ENCODE measurements at regions of chr9 and their contacts with region 1.

Region 1: DNA sequence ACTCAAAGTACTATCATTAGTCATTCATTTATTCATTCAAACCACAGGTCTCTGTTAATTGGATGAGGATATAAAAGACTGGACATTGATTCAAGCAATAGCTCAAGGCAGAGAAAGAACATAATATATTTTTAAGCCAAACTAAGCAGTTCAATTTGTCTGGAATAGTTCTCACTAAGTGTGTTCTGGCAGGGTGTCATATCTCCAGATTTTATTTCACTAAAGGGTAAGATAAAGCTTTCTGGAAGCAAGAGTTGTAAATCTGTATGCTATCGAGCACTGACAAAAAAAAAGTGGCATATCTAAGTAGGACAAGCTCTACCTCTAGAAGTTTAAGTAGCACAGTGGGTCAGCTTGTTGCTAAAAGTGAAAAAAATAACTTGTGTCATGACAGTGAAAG is 375.6 kb downstream of the TUSC1 start:
- DNase-seq: no peak
- ATAC-seq: no peak
- H3K4me3 ChIP-seq: no peak overlapping the region
- H3K4me3 Mint-ChIP-seq: no peak overlapping the region
- H3K27ac ChIP-seq: no peak overlapping the region
- H3K27ac Mint-ChIP-seq: no peak overlapping the region
- H3K4me1 ChIP-seq: no peaks in the 10 kb centered on the region
- H3K4me1 Mint-ChIP-seq: no peaks in the 10 kb centered on the region
- H3K27me3 ChIP-seq: no peaks in the 10 kb centered on the region
- H3K27me3 Mint-ChIP-seq: no peaks in the 10 kb centered on the region
- CTCF ChIP-seq: no peak

Region 2: DNA sequence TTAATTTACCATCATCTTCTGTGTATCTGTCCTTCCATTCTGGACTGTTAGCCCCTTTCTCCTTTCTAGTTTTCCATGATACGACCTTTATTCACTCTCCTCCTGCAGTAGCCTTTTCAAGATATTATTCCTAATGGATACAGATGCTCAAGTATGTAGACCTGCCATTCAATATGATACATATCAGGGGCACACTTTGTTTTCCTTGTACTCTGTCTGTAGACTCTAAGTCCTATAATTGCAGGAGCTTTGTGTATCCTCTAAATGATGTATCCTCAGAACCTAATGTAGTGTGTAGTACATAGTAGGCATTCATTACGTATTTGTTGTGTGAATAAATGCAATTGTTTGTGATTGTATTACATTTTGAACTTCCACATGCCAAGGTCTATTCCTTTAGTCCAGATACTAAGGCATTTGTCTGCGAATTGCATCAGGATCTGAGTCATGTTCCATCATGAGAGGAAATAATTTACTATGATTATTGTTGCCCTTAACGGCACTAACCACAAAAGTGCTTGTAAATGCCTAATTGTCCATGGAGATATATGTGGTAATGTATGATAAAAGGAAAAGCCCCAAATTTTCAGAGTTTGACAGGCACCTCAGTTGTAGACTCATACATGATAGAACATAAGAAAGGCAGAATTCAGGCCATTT is 699.8 kb before region 1 on chr9:
- CTCF ChIA-PET with region 1: no interaction called
- POLR2A ChIA-PET with region 1: no interaction called
- intact Hi-C with region 1: loop called in 1 of 2 experiments (anchors 10 kb)
- DNase-seq: no peak
- ATAC-seq: no peak
- H3K4me3 ChIP-seq: no peak overlapping the region
- H3K4me3 Mint-ChIP-seq: no peak overlapping the region
- H3K27ac ChIP-seq: no peak overlapping the region
- H3K27ac Mint-ChIP-seq: no peak overlapping the region
- H3K4me1 ChIP-seq: no peaks in the 10 kb centered on the region
- H3K4me1 Mint-ChIP-seq: no peaks in the 10 kb centered on the region
- H3K27me3 ChIP-seq: no peaks in the 10 kb centered on the region
- H3K27me3 Mint-ChIP-seq: no peaks in the 10 kb centered on the region
- CTCF ChIP-seq: no peak

Region 3: DNA sequence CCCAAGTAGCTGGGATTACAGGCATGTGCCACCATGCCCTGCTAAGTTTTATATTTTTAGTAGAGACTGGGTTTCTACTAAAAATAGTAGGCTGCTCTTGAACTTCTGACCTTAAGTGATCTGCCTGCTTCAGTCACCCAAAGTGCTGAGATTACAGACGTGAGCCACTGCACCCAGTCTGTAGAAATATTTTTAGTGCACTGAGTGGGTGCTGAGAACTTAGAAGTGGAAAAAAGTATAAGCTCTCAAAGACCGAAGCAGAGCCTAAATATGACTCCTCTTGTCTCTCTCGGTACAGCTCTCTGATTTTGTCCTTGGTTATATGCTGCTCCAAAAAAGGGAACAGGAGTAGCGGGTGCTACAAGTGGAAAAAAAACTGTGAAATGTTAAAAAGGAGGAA is 403.1 kb before region 1 on chr9:
- CTCF ChIA-PET with region 1: no interaction called
- POLR2A ChIA-PET with region 1: no interaction called
- intact Hi-C with region 1: no loop called
- DNase-seq: no peak
- ATAC-seq: no peak
- H3K4me3 ChIP-seq: no peak overlapping the region
- H3K4me3 Mint-ChIP-seq: no peak overlapping the region
- H3K27ac ChIP-seq: no peak overlapping the region
- H3K27ac Mint-ChIP-seq: no peak overlapping the region
- H3K4me1 ChIP-seq: no peaks in the 10 kb centered on the region
- H3K4me1 Mint-ChIP-seq: no peaks in the 10 kb centered on the region
- H3K27me3 ChIP-seq: no peaks in the 10 kb centered on the region
- H3K27me3 Mint-ChIP-seq: no peaks in the 10 kb centered on the region
- CTCF ChIP-seq: no peak

Region 4: DNA sequence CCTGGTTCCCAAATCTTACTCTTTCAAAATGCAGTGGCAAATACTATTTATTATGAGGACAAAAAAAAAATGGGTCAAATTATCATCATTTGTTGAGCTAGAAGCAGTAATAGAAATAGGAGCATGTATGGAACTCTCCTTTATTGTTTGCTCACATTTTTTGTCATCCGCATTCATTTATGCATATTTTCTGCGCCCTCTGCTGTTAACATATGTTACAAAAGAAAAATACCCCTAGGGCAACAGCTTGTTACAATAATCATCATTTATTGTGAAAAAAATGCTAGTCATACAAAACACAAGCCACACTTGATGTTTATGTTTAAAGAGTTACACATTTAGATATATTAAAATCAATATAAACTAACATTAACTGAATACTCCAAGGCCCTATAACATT is 47.4 kb after region 1 on chr9:
- CTCF ChIA-PET with region 1: no interaction called
- POLR2A ChIA-PET with region 1: no interaction called
- intact Hi-C with region 1: no loop called
- DNase-seq: no peak
- ATAC-seq: no peak
- H3K4me3 ChIP-seq: no peak overlapping the region
- H3K4me3 Mint-ChIP-seq: no peak overlapping the region
- H3K27ac ChIP-seq: no peak overlapping the region
- H3K27ac Mint-ChIP-seq: no peak overlapping the region
- H3K4me1 ChIP-seq: no peaks in the 10 kb centered on the region
- H3K4me1 Mint-ChIP-seq: no peaks in the 10 kb centered on the region
- H3K27me3 ChIP-seq: no peaks in the 10 kb centered on the region
- H3K27me3 Mint-ChIP-seq: no peaks in the 10 kb centered on the region
- CTCF ChIP-seq: no peak

Measured in CD4-positive, alpha-beta T cell (primary cell).